Caco-2 (cell line): ENCODE measurements at regions of chr9 and their contacts with region 1.

Region 1: GRCh38 chr9:22037954-22038690 is 29.0 kb upstream of the CDKN2B start:
- DNase-seq: no peak
- H3K4me3 ChIP-seq: no peak overlapping the region
- H3K4me3 Mint-ChIP-seq: no peak overlapping the region
- H3K27ac Mint-ChIP-seq: no peak overlapping the region
- H3K4me1 ChIP-seq: peaks cover 14% of the 10 kb centered on the region
- H3K4me1 Mint-ChIP-seq: no peaks in the 10 kb centered on the region
- H3K27me3 ChIP-seq: no peaks in the 10 kb centered on the region
- H3K27me3 Mint-ChIP-seq: no peaks in the 10 kb centered on the region
- CTCF ChIP-seq: peak; percentile 26 to 43

Region 2: GRCh38 chr9:22147813-22148524 is 109.8 kb after region 1 on chr9:
- CTCF ChIA-PET with region 1: no interaction called
- POLR2A ChIA-PET with region 1: no interaction called
- intact Hi-C with region 1: no loop called
- DNase-seq: no peak
- H3K4me3 ChIP-seq: no peak overlapping the region
- H3K4me3 Mint-ChIP-seq: no peak overlapping the region
- H3K27ac Mint-ChIP-seq: no peak overlapping the region
- H3K4me1 ChIP-seq: peaks cover 2% of the 10 kb centered on the region; the same call in 1 of the 2 replicates
- H3K4me1 Mint-ChIP-seq: no peaks in the 10 kb centered on the region
- H3K27me3 ChIP-seq: no peaks in the 10 kb centered on the region
- H3K27me3 Mint-ChIP-seq: peaks cover 4% of the 10 kb centered on the region
- CTCF ChIP-seq: no peak

Region 3: GRCh38 chr9:22238809-22239684 is 200.9 kb after region 1 on chr9:
- CTCF ChIA-PET with region 1: no interaction called
- POLR2A ChIA-PET with region 1: no interaction called
- intact Hi-C with region 1: loop called (anchors 2 kb)
- DNase-seq: no peak
- H3K4me3 ChIP-seq: no peak overlapping the region
- H3K4me3 Mint-ChIP-seq: no peak overlapping the region
- H3K27ac Mint-ChIP-seq: peak overlapping the region; percentile 56
- H3K4me1 ChIP-seq: peaks cover 20% of the 10 kb centered on the region
- H3K4me1 Mint-ChIP-seq: peaks cover 17% of the 10 kb centered on the region
- H3K27me3 ChIP-seq: no peaks in the 10 kb centered on the region
- H3K27me3 Mint-ChIP-seq: peaks cover 6% of the 10 kb centered on the region
- CTCF ChIP-seq: peak; percentile 10 to 39